GM23248 (cell line): ENCODE measurements at regions of chr11 and their contacts with region 1.

Region 1: DNA sequence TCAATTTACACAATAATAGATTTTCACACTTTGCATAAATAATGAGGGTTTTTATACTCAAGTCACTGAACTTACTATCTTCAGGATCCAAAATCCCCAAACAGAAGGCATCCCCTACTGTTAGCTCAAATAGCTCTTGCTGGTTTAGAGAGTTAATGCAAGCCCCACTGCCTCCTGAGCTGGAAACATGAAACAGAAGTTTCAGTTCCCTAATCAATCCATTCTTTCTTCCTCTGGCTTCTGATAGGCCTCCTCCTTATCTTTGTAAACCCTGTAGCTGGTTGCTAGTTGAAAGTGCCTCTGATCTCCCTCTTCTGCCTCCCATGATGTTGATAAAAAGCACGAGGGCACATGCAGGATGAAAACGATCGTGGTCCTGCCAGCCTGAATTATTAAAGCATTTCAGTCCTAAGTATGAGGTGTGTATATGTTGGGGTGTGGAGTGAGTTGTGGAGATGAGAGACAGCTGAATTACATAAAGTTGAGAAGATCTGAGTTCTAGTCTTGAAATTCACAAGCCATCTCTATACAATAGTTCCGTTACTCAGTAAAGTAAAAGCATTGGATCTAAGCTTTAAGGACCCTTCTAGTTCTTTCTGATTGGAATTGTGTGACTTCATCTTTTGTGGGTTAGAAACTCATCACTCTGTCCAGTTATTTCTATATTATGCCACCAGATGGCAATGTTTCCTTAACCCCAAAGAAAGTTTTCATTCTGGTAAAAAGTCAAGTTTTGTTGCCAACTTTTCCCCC is 35.0 kb upstream of the EHF start:
- DNase-seq: peak; percentile 67
- H3K4me3 ChIP-seq: 0 out of 2 replicates have a peak overlapping the region, but pooled peaks have one; percentile 42
- H3K27ac ChIP-seq: no peak overlapping the region
- H3K4me1 ChIP-seq: no peaks in the 10 kb centered on the region
- H3K27me3 ChIP-seq: 0 out of 2 replicates have a peak, but pooled peaks cover 8% of the 10 kb centered on the region

Region 2: GRCh38 chr11:34302046-34302921 is 283.6 kb before region 1 on chr11:
- in situ Hi-C with region 1: no loop called
- DNase-seq: peak; percentile 94
- H3K4me3 ChIP-seq: no peak overlapping the region
- H3K27ac ChIP-seq: peak overlapping the region; percentile 78
- H3K4me1 ChIP-seq: peaks cover 33% of the 10 kb centered on the region
- H3K27me3 ChIP-seq: no peaks in the 10 kb centered on the region

Region 3: DNA sequence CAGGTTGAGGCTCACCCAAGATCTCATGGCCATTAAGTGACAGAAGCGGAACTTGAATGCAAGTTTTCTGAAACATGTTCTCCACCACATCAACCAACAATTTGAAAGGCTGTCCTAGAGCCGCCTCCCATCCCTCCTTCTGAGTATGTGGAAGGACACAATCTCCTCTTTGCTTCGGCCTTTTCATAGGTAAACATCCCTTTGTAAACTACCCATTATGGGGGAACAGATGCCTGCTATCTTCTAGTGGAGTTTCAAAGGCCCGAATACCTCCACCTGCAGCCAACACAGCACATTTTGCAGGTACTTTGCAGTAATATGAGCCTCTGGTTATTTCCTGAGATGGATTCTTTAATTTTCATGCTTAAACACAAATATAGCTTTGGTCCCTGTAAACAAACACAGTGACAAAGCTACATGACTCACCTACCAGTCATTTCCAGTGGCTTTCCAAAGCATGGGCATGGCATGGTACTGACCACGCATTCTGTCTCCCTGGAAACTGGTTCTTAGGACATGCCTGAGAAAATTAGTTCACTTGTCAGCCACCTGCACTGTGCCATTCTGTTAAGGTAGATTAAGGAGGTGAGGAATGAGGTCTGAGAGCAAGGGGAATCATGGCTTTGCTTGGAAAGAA is 95.1 kb after region 1 on chr11:
- in situ Hi-C with region 1: no loop called
- DNase-seq: peak; percentile 77
- H3K4me3 ChIP-seq: no peak overlapping the region
- H3K27ac ChIP-seq: no peak overlapping the region
- H3K4me1 ChIP-seq: peaks cover 11% of the 10 kb centered on the region; the same call in 1 of the 2 replicates
- H3K27me3 ChIP-seq: no peaks in the 10 kb centered on the region

Region 4: DNA sequence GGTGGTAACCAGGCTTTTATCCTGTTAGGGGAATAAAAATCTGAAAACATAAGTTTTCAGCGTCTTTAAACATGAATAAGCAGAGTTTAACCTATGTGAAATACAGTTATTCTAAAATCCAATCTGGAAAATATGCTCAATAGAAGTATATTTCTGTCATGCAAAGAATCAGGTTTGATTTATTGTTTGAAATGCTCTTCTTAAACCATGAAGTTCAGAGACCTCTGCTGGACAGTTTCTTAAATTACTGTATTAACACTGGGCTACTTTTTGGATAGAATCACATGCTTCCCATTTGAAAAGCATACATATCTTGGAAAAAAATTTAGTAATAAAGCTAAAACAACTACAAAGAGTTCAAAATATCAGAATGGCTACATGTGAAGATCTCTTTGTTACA is 304.9 kb after region 1 on chr11:
- in situ Hi-C with region 1: loop called (anchors 5 kb)
- DNase-seq: peak; percentile 64
- H3K4me3 ChIP-seq: no peak overlapping the region
- H3K27ac ChIP-seq: no peak overlapping the region
- H3K4me1 ChIP-seq: no peaks in the 10 kb centered on the region
- H3K27me3 ChIP-seq: no peaks in the 10 kb centered on the region

Region 5: GRCh38 chr11:35404388-35404775 is 818.5 kb after region 1 on chr11:
- in situ Hi-C with region 1: loop called (anchors 25 kb)
- DNase-seq: peak; percentile 68
- H3K4me3 ChIP-seq: no peak overlapping the region
- H3K27ac ChIP-seq: no peak overlapping the region
- H3K4me1 ChIP-seq: no peaks in the 10 kb centered on the region
- H3K27me3 ChIP-seq: no peaks in the 10 kb centered on the region